Activated CD8-positive, alpha-beta T cell treated with anti-CD3 and anti-CD28 coated beads, Interleukin-2, amount 10 ng/mL, durations not matched to agents 7 days and 5 days (primary cell): ENCODE measurements at regions of chr16 and their contacts with region 1.

Region 1: DNA sequence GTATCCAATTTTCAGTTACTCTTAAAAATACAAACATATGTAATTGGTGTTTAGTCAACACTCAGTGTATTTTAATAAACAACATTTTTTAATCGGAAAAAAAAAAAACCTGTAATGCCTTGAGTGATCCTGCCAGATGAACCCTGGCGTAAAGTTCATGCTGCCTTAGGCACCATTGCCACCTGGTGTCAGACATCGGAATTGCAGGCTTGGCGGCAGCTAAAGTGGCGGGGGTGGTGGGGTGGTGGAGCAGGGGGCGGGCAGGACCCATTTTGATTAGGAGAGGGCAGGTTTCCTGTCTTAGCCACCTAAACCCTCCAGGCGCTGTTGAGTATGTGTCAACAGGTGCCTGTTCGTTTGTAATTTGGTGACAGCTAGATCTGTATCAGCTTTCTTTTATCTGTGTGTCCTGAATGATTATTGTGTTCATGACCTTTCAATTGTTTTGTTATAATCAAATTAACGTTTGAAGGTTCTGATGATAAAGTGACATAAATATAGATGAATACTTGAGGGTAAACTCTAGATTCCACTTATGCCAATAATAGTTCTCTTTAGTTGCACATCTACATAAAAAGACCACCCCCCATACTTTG is 588.7 kb downstream of the CDH13 start:
- DNase-seq: peak; percentile 64
- ATAC-seq: peak; percentile 67
- H3K4me3 Mint-ChIP-seq: no peak overlapping the region
- H3K27ac Mint-ChIP-seq: no peak overlapping the region
- H3K4me1 Mint-ChIP-seq: no peaks in the 10 kb centered on the region
- H3K27me3 Mint-ChIP-seq: no peaks in the 10 kb centered on the region

Region 2: DNA sequence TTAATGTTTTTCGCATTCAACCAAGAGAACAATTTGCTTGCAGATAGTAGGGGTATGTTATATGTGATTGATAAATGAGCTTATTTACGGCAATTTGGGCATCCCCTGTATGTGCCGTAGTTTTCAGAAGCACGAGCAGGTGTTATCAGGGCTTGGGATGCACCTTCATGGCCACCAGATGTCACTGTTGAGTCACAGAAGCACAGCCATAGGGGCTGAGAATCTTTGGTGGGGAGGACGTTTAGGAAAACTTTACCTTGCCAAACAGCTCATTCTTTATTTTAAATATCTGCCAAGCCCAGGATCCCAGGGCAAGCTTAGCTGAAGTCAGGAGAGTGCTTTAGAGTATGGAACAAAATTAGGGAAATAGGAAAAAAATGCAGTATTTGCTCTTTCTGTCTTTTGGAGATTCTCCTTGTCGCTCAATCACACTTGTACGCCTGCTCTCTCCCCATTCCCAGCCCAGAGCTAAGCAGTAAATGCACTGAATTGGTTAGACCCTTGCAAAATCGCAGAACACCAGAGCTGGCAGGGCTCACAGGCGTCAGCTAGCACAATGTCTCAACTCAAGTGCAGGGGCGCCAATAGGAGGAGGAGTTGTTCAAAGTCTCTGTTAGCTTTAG is 951.9 kb before region 1 on chr16:
- CTCF ChIA-PET with region 1: interaction called, 17 read pairs
- POLR2A ChIA-PET with region 1: no interaction called
- DNase-seq: peak; percentile 69
- ATAC-seq: peak; percentile 87
- H3K4me3 Mint-ChIP-seq: no peak overlapping the region
- H3K27ac Mint-ChIP-seq: no peak overlapping the region
- H3K4me1 Mint-ChIP-seq: no peaks in the 10 kb centered on the region
- H3K27me3 Mint-ChIP-seq: peaks cover 6% of the 10 kb centered on the region